ENCODE measurements at regions of chr1 and their contacts with region 1.

Region 1: DNA sequence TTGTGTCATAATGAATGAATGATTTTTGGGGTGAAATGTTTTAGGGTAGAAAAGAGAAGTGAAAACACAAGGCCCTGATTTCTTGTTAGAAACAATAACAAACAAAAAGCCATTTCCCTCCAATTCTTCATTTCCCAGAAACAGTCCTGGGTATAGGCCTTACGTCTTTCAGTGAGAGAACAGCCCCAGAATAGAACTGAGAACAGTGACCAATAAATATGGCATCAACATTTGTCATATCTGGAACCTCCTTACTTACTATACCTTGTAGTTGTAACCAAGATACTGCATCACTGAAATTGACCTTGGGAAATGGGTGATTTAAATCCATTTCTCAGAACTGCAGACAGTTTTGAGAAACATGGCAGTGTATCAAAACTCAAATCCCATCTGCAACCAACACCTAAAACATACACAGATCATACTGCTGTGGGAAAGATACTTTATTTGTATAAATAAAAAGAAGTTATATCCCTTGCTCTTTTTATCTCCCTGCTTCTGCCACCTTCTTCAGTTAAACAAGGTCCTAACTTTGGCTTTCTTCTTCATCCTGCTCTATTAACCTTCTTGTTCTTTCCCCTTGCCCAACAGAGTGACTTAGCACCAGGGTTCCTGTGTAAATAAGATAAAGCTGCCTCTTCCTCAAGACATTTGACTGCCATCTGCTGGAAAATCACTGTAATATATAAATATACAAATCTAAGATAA is 19.5 kb downstream of the XKR8 start:
- DNase-seq: peak; percentile 16 to 65
- ATAC-seq: peak; percentile 74 to 85
- H3K4me3 ChIP-seq: no peak overlapping the region
- H3K27ac ChIP-seq: peak overlapping the region in 1 of 2 experiments; percentile 22; a peak in 1 of 6 replicates
- H3K4me1 ChIP-seq: peaks cover 7% of the 10 kb centered on the region; the same call in 2 of the 3 replicates
- CTCF ChIP-seq: peak; percentile 60
- EP300 ChIP-seq: no peak
- POLR2A ChIP-seq: no peak
- RAD21 ChIP-seq: peak; percentile 63 to 69; a peak in 4 of 5 replicates

Region 2: GRCh38 chr1:27940297-27940696 is 39.0 kb before region 1 on chr1:
- CTCF ChIA-PET with region 1: interaction called, 11 read pairs
- POLR2A ChIA-PET with region 1: no interaction called
- DNase-seq: peak; percentile 20 to 22
- ATAC-seq: peak in 1 of 2 experiments; percentile 71; a peak in 3 of 6 replicates
- H3K4me3 ChIP-seq: no peak overlapping the region
- H3K27ac ChIP-seq: no peak overlapping the region
- H3K4me1 ChIP-seq: no peaks in the 10 kb centered on the region
- CTCF ChIP-seq: peak; percentile 37; the same call in 2 of the 3 replicates
- EP300 ChIP-seq: no peak
- POLR2A ChIP-seq: no peak
- RAD21 ChIP-seq: peak in 1 of 2 experiments; percentile 37; a peak in 2 of 5 replicates

Region 3: DNA sequence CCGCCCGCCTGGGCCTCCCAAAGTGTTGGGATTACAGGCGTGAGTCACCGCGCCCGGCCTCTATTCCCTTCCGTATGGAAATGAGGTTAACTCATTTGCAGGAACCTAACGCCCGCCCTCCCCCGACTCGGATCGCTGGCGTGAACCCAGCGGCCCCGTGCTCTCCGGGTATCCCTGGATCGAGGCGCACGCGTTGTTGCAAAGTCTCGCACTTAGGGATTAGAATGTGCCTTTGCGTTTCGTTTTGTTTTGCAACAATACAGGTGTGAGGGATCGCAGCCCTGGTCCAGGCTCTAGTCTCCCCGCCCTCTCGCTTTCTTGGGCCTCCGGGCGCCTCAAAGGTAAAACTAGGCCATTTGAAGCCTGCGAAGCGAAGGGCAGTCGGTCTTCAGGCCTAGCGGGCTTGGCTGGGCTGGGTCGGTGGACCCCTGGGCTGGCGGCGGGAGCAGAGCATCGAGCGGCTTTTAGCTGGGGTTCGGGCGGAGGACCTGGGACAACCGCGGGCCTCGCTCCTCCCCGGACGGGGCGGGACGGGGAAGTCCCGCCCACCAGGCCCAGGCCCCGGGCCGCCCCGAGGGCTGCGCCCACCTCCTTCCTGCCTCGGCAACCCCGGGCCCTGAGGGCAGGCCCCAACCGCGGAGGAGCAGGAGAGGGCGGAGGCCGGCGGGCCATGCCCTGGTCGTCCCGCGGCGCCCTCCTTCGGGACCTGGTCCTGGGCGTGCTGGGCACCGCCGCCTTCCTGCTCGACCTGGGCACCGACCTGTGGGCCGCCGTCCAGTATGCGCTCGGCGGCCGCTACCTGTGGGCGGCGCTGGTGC is 19.7 kb before region 1 on chr1 and contains the start of gene XKR8:
- CTCF ChIA-PET with region 1: interaction called, 13 read pairs
- POLR2A ChIA-PET with region 1: interaction called, 3 read pairs
- DNase-seq: peak; percentile 76 to 77
- ATAC-seq: peak; percentile 91 to 96
- H3K4me3 ChIP-seq: peak within 1 kb of the TSS; percentile 54
- H3K27ac ChIP-seq: peak within 1 kb of the TSS; percentile 78 to 92
- H3K4me1 ChIP-seq: peaks cover 14% of the 10 kb centered on the region
- CTCF ChIP-seq: peak; percentile 32; the same call in 1 of the 3 replicates
- EP300 ChIP-seq: no peak
- POLR2A ChIP-seq: peak; percentile 52
- RAD21 ChIP-seq: no peak
- polyA plus RNA-seq, gene XKR8: 3.3 and 4.2 TPM in 2 replicates

Region 4: DNA sequence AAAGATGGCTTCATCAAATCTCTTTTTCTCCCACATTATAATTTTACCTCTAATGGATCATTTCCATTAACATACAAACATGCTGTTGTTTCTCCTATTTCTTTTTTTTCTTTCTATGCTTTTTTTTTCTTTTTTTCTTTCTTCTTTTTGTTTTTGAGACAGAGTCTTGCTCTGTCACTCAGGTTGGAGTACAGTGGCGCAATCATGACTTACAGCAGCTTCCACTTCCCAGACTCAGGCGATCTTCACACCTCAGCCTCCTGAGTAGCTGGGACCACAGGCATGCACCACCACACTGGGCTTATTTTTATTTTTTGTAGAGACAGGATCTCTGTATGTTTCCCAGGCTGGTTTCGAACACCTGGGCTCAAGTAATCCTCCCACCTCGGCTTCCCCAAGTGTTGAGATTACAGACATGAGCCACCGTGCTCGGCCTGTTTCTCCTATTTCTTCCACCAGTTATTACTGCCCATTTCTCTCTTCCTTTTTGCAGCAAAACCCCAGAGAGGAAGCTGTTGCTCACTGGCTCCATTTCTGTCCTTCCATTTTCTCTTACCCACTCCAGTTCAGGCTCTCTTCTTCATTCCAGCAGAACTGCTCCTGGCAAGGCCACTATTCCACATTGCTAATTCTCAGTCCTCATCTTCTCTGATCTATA is 800.6 kb after region 1 on chr1:
- CTCF ChIA-PET with region 1: no interaction called
- POLR2A ChIA-PET with region 1: no interaction called
- DNase-seq: no peak
- ATAC-seq: no peak
- H3K4me3 ChIP-seq: no peak overlapping the region
- H3K27ac ChIP-seq: no peak overlapping the region
- H3K4me1 ChIP-seq: no peaks in the 10 kb centered on the region
- CTCF ChIP-seq: no peak
- EP300 ChIP-seq: no peak
- POLR2A ChIP-seq: no peak
- RAD21 ChIP-seq: no peak